Astrocyte of the cerebellum (primary cell): ENCODE measurements at regions of chr17 and their contacts with region 1.

Region 1: DNA sequence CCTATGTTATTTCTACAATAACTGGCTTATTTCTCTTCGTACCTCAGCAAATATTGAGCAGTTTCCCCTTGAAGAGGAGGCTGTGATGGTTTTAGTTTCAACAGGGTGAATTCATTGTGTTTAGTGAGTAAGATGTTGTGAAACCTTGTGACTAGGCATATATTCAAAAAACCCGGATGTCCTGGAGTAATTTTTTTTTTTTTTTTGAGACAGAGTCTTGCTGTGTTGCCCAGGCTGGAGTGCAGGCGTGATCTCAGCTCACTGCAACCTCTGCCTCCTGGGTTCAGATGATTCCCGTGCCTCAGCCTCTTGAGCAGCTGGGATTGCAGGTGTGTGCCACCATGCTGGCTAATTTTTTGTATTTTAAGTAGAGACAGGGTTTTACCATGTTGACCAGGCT is 11.1 kb downstream of the CPD start:
- DNase-seq: no peak
- H3K4me3 ChIP-seq: no peak overlapping the region
- CTCF ChIP-seq: no peak

Region 2: DNA sequence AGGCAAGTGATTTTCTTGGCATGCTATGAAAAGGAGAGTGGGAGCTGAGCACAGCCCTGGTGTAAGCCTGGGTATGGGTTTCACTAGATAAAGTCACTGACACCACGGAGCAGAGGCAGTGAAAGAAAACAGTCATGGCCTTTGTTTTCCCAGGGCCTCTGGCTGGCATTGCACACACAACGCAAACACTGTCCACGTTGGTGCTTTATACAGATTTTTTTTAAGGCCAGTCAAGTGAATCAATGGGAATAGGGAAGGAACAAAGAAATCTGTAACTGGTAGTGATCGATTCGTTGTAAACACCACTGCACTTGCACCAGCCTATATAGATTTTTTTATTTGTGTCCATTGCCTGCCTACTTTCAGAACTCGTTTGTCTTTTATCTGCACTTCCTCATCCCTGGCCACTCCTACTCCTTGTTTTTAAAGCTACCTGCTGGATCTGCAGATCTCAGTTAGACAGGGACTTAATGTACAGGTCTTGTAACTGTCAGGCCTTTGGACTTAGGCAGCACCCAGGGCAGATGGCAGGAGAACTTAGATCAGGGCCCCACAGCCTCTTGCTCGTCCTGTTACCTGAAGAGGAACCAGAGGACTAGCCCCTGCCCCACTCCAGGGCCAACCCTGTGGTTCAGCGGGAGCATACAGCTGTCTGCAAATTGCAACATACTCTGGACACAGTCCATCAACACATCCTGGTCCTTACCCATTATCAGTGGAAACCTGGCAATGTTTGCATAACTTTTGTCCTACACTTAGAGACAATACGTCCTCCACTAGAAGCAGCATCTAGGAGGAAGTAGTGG is 45.3 kb before region 1 on chr17:
- in situ Hi-C with region 1: loop called (anchors 5 kb)
- DNase-seq: peak; percentile 5
- H3K4me3 ChIP-seq: no peak overlapping the region
- CTCF ChIP-seq: no peak